Motor neuron (in vitro differentiated cells): ENCODE measurements at regions of chr9 and their contacts with region 1.

Region 1: GRCh38 chr9:111896353-111896958 is at the start of gene UGCG:
- ATAC-seq: peak; percentile 85 to 91 (median 88)
- H3K4me3 ChIP-seq: peak within 1 kb of the TSS; percentile 80 to 96 (median 89)
- H3K27ac ChIP-seq: peak within 1 kb of the TSS; percentile 82 to 90
- H3K4me1 ChIP-seq: peaks cover 3 to 9% of the 10 kb centered on the region in 2 donors
- total RNA-seq, gene UGCG: 7.1 to 51.7 (median 28.2) TPM

Region 2: DNA sequence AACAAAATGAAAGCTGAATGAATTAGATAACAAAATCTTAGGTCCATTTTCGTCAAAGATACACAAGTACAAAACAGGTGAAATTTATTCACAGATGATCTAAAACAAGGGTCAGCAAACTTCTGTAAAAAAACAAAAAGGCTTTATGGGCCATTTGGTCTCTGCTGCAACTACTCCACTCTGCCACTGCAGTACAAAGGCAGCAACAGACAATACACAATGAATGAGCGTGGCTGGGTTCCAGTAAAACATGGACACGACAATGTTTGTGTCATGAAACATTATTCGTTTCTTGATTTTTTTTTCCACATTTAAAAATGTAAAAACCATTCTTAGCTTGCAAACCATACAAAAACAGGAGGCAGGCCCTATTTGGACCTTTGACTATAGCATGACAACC is 484.2 kb before region 1 on chr9:
- in situ Hi-C with region 1: no loop called
- ATAC-seq: peak in 1 of 8 experiments; percentile 38
- H3K4me3 ChIP-seq: no peak overlapping the region
- H3K27ac ChIP-seq: no peak overlapping the region
- H3K4me1 ChIP-seq: no peaks in the 10 kb centered on the region

Region 3: DNA sequence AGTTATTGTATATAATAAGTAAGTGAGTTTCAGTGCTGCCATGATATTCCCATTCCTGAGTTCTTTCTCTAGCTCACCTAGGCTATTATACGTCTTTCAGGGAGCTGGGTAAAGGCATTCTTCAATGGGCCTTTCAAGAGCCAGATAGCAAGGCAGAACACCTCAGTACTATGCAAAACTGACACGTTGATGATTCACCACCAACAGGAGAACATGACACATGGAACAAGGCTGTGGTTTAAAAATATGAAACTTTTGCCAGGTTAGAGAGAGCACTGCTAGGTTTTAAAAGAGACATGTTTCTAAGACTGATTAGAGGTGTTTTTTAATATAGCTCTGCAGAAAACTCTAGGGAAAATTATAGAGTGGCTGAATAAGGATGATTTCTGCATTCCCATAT is 96.1 kb after region 1 on chr9:
- in situ Hi-C with region 1: no loop called
- ATAC-seq: peak in 2 of 8 experiments; percentile 53 to 57
- H3K4me3 ChIP-seq: no peak overlapping the region
- H3K27ac ChIP-seq: no peak overlapping the region
- H3K4me1 ChIP-seq: no peaks in the 10 kb centered on the region

Region 4: GRCh38 chr9:112074250-112075008 is 178.0 kb after region 1 on chr9:
- in situ Hi-C with region 1: loop called in 1 of 9 experiments (anchors 25 kb)
- ATAC-seq: peak in 6 of 8 experiments; percentile 57 to 91 (median 80)
- H3K4me3 ChIP-seq: no peak overlapping the region
- H3K27ac ChIP-seq: no peak overlapping the region
- H3K4me1 ChIP-seq: no peaks in the 10 kb centered on the region